ENCODE measurements at regions of chr3 and their contacts with region 1.

Region 1: GRCh38 chr3:49339945-49340800 is at the start of gene USP4:
- DNase-seq: peak; percentile 88 to 94 (median 90)
- H3K4me3 ChIP-seq: peak within 1 kb of the TSS; percentile 28 to 91 (median 64)
- H3K27ac ChIP-seq: peak within 1 kb of the TSS; percentile 78 to 95 (median 85)
- H3K4me1 ChIP-seq: peaks cover 12 to 34% of the 10 kb centered on the region in 2 donors
- H3K27me3 ChIP-seq: no peaks in the 10 kb centered on the region
- CTCF ChIP-seq: peak in 3 of 6 experiments; percentile 17 to 37 (median 23)
- POLR2A ChIP-seq: peak; percentile 33 to 72
- total RNA-seq, gene USP4: 14.2 to 56.9 (median 39.0) TPM

Region 2: GRCh38 chr3:48989796-48990635 is 350.2 kb before region 1 on chr3 and contains the start of gene P4HTM:
- intact Hi-C with region 1: no loop called
- DNase-seq: peak; percentile 84 to 95 (median 92)
- H3K4me3 ChIP-seq: peak within 1 kb of the TSS; percentile 35 to 91 (median 75)
- H3K27ac ChIP-seq: peak within 1 kb of the TSS; percentile 65 to 99 (median 89)
- H3K4me1 ChIP-seq: peaks cover 15 to 25% of the 10 kb centered on the region in 2 donors
- H3K27me3 ChIP-seq: no peaks in the 10 kb centered on the region
- CTCF ChIP-seq: peak in 5 of 6 experiments; percentile 24 to 37 (median 30)
- POLR2A ChIP-seq: peak; percentile 57 to 91
- total RNA-seq, gene P4HTM: 38.8 to 174 (median 99.8) TPM

Region 3: DNA sequence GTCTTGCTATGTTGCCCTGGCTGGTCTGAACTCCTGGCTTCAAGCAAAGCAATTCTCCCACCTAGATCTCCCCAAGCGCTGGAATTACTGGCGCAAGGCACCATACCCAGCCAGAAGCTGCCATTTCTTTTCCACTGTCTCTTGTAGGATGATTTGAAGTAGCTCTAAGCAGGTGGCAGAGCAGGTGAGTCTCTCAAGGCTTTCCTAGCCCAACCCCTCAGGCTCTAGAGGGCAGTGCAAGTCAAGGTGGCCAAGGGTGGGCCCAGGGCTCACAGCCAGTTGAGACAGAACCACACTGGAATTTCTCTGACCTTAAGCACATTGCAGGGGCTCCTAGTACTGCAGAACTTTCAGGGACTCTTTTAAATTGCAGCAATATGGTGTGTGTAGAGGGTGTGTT is 114.3 kb after region 1 on chr3:
- intact Hi-C with region 1: loop called in 1 of 2 experiments (anchors 10 kb)
- DNase-seq: peak in 1 of 7 donors; percentile 28
- H3K4me3 ChIP-seq: no peak overlapping the region
- H3K27ac ChIP-seq: peak overlapping the region in 1 of 5 donors; percentile 47
- H3K4me1 ChIP-seq: peaks cover 0 to 4% of the 10 kb centered on the region in 2 donors
- H3K27me3 ChIP-seq: no peaks in the 10 kb centered on the region
- CTCF ChIP-seq: peak in 1 of 6 experiments; percentile 7
- POLR2A ChIP-seq: no peak

Measured in adrenal gland (tissue), 19 donors.